Right lobe of liver (tissue), 6 donors: ENCODE measurements at regions of chr15 and their contacts with region 1.

Region 1: DNA sequence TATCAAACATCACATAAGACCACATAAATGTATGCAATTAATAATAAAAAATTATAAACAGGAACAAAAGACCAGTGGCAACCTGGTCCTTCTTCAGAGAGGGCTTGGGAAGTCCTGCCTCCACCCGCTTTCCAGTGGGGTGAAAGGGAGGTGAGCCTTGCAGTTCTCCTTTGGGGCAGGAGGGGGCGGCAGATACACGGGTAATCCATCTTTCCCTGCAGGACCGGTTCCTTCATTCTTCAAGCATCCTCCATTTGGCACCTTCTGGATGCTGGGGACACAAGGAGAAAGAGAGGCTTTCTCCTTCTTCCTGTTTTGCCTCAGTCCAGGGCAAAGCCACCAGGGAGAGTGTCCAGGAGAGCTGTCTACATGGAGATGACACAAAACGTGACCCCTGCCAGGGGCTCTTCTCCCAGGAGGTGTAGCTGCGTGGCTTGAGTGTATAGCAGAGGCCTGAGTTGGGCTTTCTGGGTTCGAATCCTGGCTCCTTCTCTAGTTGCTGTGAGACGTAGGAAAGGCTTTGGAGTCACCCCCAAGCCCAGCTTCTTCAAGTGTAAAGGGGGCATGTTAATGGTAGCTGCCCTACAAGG is 23.2 kb downstream of the RPLP1 start:
- DNase-seq: peak; percentile 72 to 79 (median 78)
- ATAC-seq: peak; percentile 95 to 99 (median 96)
- H3K4me3 ChIP-seq: no peak overlapping the region
- H3K27ac ChIP-seq: no peak overlapping the region
- H3K4me1 ChIP-seq: no peaks in the 10 kb centered on the region
- H3K27me3 ChIP-seq: no peaks in the 10 kb centered on the region
- CTCF ChIP-seq: peak; percentile 88 to 97 (median 96)
- POLR2A ChIP-seq: no peak

Region 2: GRCh38 chr15:69523010-69524001 is 47.4 kb after region 1 on chr15:
- intact Hi-C with region 1: no loop called
- DNase-seq: peak; percentile 80 to 85 (median 83)
- ATAC-seq: peak; percentile 87 to 98 (median 92)
- H3K4me3 ChIP-seq: no peak overlapping the region
- H3K27ac ChIP-seq: no peak overlapping the region
- H3K4me1 ChIP-seq: no peaks in the 10 kb centered on the region
- H3K27me3 ChIP-seq: no peaks in the 10 kb centered on the region
- CTCF ChIP-seq: peak; percentile 68 to 86 (median 78)
- POLR2A ChIP-seq: no peak

Region 3: DNA sequence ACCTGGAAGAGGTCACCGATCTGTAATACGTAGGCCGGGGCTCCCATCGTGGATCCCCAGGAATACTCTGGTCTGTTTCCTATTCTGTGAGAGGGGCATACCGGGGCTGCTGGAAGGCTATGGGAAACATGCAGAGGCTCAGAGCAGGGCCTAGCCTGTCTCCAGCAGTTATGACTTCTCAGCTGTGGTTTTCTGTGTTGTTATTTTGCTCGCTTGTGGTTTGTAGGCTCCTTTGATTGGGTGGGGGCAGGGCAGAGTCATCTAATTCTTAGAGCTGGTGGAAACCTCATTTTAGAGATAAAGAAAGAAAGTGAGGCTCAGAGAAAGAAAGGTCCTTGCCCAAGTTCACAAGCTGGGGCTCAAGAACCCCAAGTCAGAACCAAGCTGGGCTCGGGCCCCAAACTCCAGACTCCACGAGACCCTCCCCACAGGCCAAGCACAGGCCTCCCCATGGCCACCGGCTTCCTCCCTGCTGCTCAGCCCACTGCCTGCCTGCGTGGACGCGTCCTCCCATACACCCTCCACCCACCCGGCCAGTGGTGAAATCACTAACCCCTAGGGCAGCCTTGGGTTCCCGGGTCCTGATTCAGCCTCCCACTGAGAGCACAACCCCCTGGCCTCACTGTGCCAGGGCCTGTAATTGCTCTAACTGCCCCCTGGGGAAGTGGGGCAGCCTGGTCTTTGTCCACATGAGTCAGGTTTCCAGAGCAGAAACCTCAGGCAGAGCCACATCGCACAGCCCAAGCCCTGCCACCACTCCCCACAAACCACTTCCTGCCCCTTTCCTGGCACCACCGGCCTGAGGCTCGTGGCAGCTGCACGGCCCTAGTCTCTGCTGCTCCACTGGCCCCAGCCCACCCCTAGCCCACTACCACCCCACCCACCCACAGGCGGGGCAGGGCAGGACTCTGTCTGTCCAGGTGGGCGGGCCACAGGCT is 1016.6 kb after region 1 on chr15:
- intact Hi-C with region 1: loop called in 1 of 2 experiments (anchors 10 kb)
- DNase-seq: peak in 2 of 3 donors; percentile 64 to 71
- ATAC-seq: peak; percentile 37 to 60 (median 50)
- H3K4me3 ChIP-seq: no peak overlapping the region
- H3K27ac ChIP-seq: no peak overlapping the region
- H3K4me1 ChIP-seq: peaks cover 0 to 4% (median 2%) of the 10 kb centered on the region in 4 donors
- H3K27me3 ChIP-seq: no peaks in the 10 kb centered on the region
- CTCF ChIP-seq: no peak
- POLR2A ChIP-seq: no peak